ENCODE measurements at regions of chr15 and their contacts with region 1.

Region 1: DNA sequence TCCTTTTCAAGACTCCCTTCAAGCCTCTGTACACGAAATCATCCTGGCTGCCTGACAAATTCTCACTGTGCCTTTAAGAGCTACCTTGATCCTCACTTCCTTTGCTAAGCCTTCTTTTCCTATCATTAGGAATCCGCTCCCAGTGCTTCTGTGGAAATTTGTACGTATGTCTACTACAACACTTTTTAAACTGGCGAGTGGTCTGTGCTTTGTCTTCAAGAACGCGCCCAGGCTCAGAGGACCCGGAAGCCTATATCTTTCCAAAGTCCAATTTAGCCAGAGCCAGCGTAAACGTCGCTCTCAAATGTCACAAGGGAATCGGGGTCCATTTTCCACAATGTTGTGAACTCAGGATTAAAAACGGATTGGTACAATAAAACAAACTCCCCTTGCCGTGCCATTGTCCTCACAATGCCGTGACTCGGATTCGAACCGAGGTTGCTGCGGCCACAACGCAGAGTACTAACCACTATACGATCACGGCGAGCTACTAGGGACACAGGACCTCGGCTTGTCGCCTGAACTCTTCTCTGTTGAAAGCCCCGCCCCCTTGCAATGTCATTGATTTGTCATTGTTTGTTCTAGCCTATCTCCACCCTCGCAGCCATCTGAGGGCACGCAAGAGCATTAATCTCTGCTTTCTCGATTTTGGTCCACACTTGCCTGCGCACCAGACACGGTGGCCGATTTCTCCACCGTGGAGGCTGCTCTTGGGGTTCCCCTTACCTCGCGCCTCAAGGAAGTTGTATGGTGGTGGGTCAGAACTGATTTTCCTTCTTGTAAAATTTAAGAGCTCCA is 12.4 kb upstream of the SHF start:
- DNase-seq: peak; percentile 89 to 99 (median 98)

Region 2: DNA sequence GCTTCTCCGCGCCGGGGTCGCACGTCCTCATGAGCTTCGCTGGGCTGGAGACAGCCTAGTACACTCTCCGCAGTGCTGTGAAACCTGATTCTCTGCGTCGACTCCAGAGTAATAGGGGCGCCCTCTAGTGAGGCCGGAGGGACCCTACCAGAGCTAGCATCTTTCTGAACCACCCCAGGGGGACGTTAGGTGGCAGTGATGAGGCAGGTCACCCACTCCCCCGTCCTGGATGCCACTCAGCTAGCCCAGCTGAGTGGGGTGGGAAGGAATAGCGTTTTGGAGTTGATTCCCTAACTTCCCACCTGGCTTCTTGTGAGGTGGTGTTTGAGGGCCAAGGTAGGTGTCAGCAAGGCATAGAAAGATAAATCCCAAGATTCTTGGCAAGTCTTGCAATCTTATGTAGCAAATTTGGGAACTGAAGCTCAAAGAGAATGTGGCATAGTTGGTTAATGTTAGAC is 82.0 kb before region 1 on chr15:
- intact Hi-C with region 1: no loop called
- DNase-seq: peak; percentile 80 to 97 (median 92)

Region 3: GRCh38 chr15:45169608-45170480 is 30.4 kb before region 1 on chr15:
- intact Hi-C with region 1: loop called (anchors 2 kb)
- DNase-seq: no peak

Region 4: GRCh38 chr15:45402162-45402954 is 202.2 kb after region 1 on chr15:
- intact Hi-C with region 1: loop called (anchors 2 kb)
- DNase-seq: peak; percentile 93 to 99 (median 98)